ENCODE measurements at regions of chr18 and their contacts with region 1.

Region 1: DNA sequence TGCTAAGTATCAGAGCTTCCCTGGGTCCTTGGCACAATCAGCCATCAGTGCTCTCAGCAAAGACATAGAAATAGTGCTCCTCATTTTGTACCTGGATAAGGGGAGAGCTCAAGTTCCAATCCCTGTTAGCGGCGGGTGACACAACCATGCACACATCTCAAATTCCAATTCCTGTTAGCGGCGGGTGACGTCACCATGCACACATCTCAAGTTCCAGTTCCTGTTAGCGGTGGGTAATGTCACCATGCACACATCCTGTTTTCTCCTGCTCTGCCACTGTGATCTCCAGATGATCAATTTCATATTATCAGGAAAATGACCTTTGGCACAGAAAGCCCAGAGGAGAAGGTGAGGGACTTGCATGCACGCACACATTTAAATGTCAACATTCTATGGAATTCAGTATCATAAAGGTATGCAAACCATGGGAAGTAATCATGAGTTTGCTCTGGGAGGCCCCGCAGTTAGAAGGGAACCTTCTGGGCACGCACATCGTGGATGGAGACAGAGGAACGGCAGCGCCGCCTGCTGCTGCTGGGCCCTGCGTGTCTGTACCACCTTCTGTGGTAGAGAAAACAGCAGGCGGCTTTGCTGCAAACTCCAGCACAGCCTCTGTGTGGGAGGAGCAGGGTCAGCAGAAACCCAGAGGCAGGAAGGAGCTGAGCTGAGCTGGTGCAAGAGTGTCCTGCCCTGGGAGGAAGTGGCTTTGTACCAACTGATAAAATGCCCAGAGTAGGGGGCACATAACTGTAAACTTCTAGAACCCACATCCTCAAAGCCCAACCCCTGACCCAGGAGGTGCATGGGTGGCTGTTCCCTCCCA is 77.8 kb downstream of the MBP start:
- DNase-seq: peak; percentile 80 to 88 (median 86)
- H3K4me3 ChIP-seq: peak overlapping the region in 1 of 2 donors; percentile 54
- H3K4me3 Mint-ChIP-seq: peak overlapping the region; percentile 72 to 92 (median 86)
- H3K27ac ChIP-seq: peak overlapping the region; percentile 84
- H3K27ac Mint-ChIP-seq: peak overlapping the region; percentile 93 to 100 (median 97)
- H3K4me1 ChIP-seq: peaks cover 83% of the 10 kb centered on the region
- H3K4me1 Mint-ChIP-seq: peaks cover 56 to 79% (median 68%) of the 10 kb centered on the region in 4 donors
- H3K27me3 ChIP-seq: no peaks in the 10 kb centered on the region
- H3K27me3 Mint-ChIP-seq: no peaks in the 10 kb centered on the region

Region 2: GRCh38 chr18:77124452-77124922 is 69.7 kb after region 1 on chr18:
- CTCF ChIA-PET with region 1: interaction called, 18 read pairs
- POLR2A ChIA-PET with region 1: interaction called, 68 read pairs
- intact Hi-C with region 1: no loop called
- DNase-seq: peak in 4 of 5 donors; percentile 38 to 79 (median 46)
- H3K4me3 ChIP-seq: peak overlapping the region in 1 of 2 donors; percentile 34
- H3K4me3 Mint-ChIP-seq: peak overlapping the region; percentile 71 to 88 (median 80)
- H3K27ac ChIP-seq: peak overlapping the region; percentile 66
- H3K27ac Mint-ChIP-seq: peak overlapping the region; percentile 86 to 96 (median 89)
- H3K4me1 ChIP-seq: peaks cover 99% of the 10 kb centered on the region
- H3K4me1 Mint-ChIP-seq: peaks cover 75 to 100% (median 91%) of the 10 kb centered on the region in 4 donors
- H3K27me3 ChIP-seq: no peaks in the 10 kb centered on the region
- H3K27me3 Mint-ChIP-seq: no peaks in the 10 kb centered on the region

Region 3: GRCh38 chr18:77207540-77207939 is 152.7 kb after region 1 on chr18:
- CTCF ChIA-PET with region 1: interaction called, 28 read pairs
- POLR2A ChIA-PET with region 1: interaction called, 7 read pairs
- intact Hi-C with region 1: loop called (anchors 1 kb)
- DNase-seq: peak; percentile 55 to 79 (median 67)
- H3K4me3 ChIP-seq: no peak overlapping the region
- H3K4me3 Mint-ChIP-seq: peak overlapping the region; percentile 60 to 80 (median 72)
- H3K27ac ChIP-seq: no peak overlapping the region
- H3K27ac Mint-ChIP-seq: peak overlapping the region; percentile 41 to 92 (median 85)
- H3K4me1 ChIP-seq: peaks cover 37% of the 10 kb centered on the region
- H3K4me1 Mint-ChIP-seq: peaks cover 29 to 52% (median 41%) of the 10 kb centered on the region in 4 donors
- H3K27me3 ChIP-seq: no peaks in the 10 kb centered on the region
- H3K27me3 Mint-ChIP-seq: peaks cover 0 to 4% of the 10 kb centered on the region in 2 donors